Ascending aorta (tissue), 2 donors: ENCODE measurements at regions of chr19 and their contacts with region 1.

Region 1: DNA sequence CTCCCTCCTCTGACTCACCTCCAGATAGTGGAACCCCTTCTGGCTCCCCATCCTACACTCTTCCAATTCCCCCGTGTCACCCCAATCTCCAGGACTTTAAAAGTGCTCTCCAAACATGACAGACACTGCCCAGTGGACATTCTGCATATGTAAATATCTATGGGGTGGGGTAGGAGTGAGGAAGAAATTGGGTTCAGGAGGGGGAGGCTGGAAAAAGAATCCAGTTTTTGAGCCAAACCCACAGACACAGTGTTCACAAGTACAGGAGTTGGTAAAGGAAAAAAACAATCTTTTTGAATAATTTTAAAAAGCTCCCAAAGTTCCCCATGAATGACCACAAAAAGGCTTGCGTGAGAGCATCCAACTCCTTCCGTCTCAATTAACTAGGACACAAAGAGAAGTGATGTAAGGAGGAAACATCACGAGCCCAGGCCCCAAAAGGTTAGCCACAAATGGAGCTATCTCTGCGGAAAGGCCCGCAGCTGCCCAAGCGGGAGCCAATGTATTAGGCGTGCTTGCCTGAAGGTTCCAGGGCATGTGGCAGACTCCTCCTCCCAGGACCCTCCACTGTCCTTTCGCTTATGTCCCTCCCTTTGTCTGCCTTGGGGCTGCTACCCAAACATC is 18.0 kb downstream of the ZC3H4 start:
- DNase-seq: no peak
- H3K4me3 ChIP-seq: no peak overlapping the region
- H3K27ac ChIP-seq: peak overlapping the region; percentile 60 to 68
- H3K4me1 ChIP-seq: peaks cover 2 to 17% of the 10 kb centered on the region in 2 donors
- H3K27me3 ChIP-seq: no peaks in the 10 kb centered on the region
- CTCF ChIP-seq: no peak

Region 2: DNA sequence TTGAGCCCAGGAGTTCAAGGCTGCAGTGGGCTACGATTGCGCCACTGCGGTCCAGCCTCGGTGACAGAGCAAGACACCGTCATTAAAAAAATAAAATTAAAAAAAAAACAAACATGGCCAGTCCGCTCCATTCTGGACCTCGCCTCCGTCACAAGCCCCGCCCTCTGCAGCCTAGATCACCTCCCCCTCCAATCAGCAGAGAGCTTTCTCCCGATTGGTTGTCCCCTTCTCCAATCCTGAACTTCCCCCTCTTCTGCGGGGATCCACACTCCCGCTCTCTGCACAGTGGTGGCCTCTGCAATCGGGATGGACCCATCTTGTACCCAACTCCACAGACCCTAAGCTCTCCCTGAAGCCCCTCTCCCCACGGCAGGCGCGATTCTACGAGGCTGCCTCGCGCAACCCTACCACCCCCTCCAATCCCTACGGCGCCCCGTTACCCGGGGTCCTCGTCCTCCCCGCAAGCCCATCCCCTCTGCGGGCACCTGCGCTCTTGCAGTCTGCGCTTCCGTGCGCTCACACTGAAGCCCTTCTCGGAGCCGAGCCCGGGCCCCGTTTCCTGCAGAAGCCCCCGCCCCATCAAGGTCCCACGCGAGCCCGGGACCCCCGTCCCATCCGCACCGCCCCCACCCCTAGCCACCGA is 47.7 kb before region 1 on chr19:
- intact Hi-C with region 1: no loop called
- DNase-seq: peak; percentile 58 to 89
- H3K4me3 ChIP-seq: peak overlapping the region; percentile 77 to 83
- H3K27ac ChIP-seq: peak overlapping the region; percentile 80
- H3K4me1 ChIP-seq: peaks cover 0 to 4% of the 10 kb centered on the region in 2 donors
- H3K27me3 ChIP-seq: no peaks in the 10 kb centered on the region
- CTCF ChIP-seq: no peak

Region 3: DNA sequence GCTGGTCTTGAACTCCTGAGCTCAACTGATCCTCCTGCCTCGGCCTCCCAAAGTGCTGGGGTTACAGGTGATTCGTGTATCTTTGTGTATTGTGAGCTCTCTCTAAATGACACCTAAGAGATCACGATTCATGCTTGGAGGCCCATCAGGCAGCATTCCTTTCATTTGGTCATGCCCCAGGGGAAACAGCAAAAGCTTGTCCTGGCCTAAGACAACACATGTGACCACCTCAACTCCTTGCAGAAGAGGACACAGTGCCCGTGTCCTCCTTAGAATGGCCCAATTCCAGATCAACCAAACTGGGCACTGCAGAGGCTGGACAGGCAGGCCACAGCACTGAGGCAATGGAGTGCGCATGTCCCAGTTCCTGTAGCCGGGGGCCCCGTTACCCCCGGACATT is 14.5 kb before region 1 on chr19:
- intact Hi-C with region 1: loop called (anchors 2 kb)
- DNase-seq: no peak
- H3K4me3 ChIP-seq: no peak overlapping the region
- H3K27ac ChIP-seq: peak overlapping the region; percentile 15 to 79
- H3K4me1 ChIP-seq: peaks cover 3% of the 10 kb centered on the region in 2 donors
- H3K27me3 ChIP-seq: no peaks in the 10 kb centered on the region
- CTCF ChIP-seq: no peak